ENCODE measurements at regions of chr6 and their contacts with region 1.

Region 1: DNA sequence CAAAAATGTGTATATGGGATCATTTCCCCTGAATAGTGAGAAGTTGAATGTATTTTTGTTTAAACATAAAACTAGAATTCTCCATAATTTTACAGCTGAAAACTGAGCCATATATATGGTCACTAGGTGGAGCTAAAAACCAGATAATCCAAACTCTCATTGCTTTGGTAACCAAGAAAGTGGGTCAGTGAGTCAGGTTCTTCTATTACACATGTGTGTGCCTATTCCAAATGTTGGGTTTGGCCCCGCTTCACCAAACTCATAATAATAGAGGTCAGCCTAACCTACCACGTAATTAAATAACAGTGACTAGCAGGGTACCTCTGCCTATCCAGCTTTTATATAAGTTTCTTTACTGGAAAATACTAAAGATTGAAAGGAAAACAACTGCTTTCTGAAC is 19.3 kb upstream of the RNGTT start:
- DNase-seq: peak; percentile 84
- H3K4me3 ChIP-seq: no peak overlapping the region
- H3K27ac ChIP-seq: peak overlapping the region in 1 of 4 donors; percentile 45
- H3K4me1 ChIP-seq: peaks cover 0 to 9% (median 7%) of the 10 kb centered on the region in 4 donors
- H3K27me3 ChIP-seq: no peaks in the 10 kb centered on the region
- CTCF ChIP-seq: peak; percentile 48 to 73 (median 66)
- EP300 ChIP-seq: no peak
- POLR2A ChIP-seq: no peak

Region 2: DNA sequence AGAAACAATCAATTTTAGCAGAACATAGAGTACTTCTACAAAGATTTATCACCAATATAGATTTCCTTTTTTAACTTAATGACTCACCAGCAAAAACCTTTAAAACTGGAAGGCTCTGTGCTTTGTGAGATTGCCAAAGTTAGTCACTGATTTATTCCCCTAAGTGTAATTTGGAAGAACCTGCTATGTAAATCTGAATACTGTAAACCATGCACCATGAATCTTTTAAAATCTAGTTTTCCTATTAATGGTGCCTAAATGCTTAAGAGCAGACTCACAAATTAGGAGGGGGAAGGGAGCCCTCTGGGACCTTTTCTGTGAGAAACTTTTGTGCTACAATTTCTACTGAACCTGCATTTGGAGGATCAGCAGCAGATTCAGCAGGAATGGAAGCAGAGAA is 40.1 kb after region 1 on chr6:
- intact Hi-C with region 1: loop called (anchors 5 kb)
- DNase-seq: no peak
- H3K4me3 ChIP-seq: no peak overlapping the region
- H3K27ac ChIP-seq: peak overlapping the region; percentile 78 to 89 (median 84)
- H3K4me1 ChIP-seq: peaks cover 0 to 43% (median 41%) of the 10 kb centered on the region in 4 donors
- H3K27me3 ChIP-seq: no peaks in the 10 kb centered on the region
- CTCF ChIP-seq: no peak
- EP300 ChIP-seq: peak; percentile 60 to 97 (median 95)
- POLR2A ChIP-seq: no peak

Region 3: GRCh38 chr6:89080542-89081422 is 98.1 kb after region 1 on chr6 and contains the start of gene PNRC1:
- intact Hi-C with region 1: loop called (anchors 2 kb)
- DNase-seq: peak; percentile 100
- H3K4me3 ChIP-seq: peak within 1 kb of the TSS; percentile 100
- H3K27ac ChIP-seq: peak within 1 kb of the TSS; percentile 100
- H3K4me1 ChIP-seq: peaks cover 0 to 37% (median 30%) of the 10 kb centered on the region in 4 donors
- H3K27me3 ChIP-seq: no peaks in the 10 kb centered on the region
- CTCF ChIP-seq: no peak
- EP300 ChIP-seq: peak in 1 of 4 donors; percentile 66
- POLR2A ChIP-seq: peak; percentile 99
- total RNA-seq, gene PNRC1: 211 to 349 (median 300) TPM

Region 4: GRCh38 chr6:89242574-89243330 is 260.0 kb after region 1 on chr6:
- intact Hi-C with region 1: loop called (anchors 1 kb)
- DNase-seq: no peak
- H3K4me3 ChIP-seq: no peak overlapping the region
- H3K27ac ChIP-seq: peak overlapping the region in 1 of 4 donors; percentile 6
- H3K4me1 ChIP-seq: peaks cover 0 to 8% (median 0%) of the 10 kb centered on the region in 4 donors
- H3K27me3 ChIP-seq: no peaks in the 10 kb centered on the region
- CTCF ChIP-seq: peak; percentile 35 to 70 (median 64)
- EP300 ChIP-seq: no peak
- POLR2A ChIP-seq: no peak

Region 5: DNA sequence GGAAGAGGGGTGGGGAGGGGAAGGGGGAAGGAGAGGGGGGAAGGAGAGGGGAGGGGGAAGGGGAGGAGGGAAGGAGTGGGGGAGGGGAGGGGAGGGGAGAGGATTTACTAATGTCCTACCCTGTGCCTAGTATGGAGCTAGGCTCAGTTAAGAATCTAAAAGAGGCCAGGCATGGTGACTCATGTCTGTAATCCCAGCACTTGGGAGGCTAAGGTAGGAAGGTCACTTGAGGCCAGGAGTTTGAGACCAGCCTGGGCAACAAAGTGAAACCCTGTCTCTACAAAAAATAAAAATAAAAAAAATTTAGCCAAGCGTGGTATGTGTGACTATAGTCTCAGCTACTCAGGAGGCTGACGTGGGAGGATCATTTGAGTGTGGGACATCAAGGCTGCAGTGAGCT is 356.8 kb after region 1 on chr6:
- intact Hi-C with region 1: no loop called
- DNase-seq: no peak
- H3K4me3 ChIP-seq: no peak overlapping the region
- H3K27ac ChIP-seq: no peak overlapping the region
- H3K4me1 ChIP-seq: peaks cover 0 to 8% (median 0%) of the 10 kb centered on the region in 4 donors
- H3K27me3 ChIP-seq: no peaks in the 10 kb centered on the region
- CTCF ChIP-seq: no peak
- EP300 ChIP-seq: no peak
- POLR2A ChIP-seq: no peak

Region 6: GRCh38 chr6:89371849-89372505 is 389.3 kb after region 1 on chr6:
- intact Hi-C with region 1: loop called (anchors 5 kb)
- DNase-seq: peak; percentile 77
- H3K4me3 ChIP-seq: no peak overlapping the region
- H3K27ac ChIP-seq: no peak overlapping the region
- H3K4me1 ChIP-seq: peaks cover 0 to 21% (median 11%) of the 10 kb centered on the region in 4 donors
- H3K27me3 ChIP-seq: no peaks in the 10 kb centered on the region
- CTCF ChIP-seq: peak; percentile 51 to 95 (median 72)
- EP300 ChIP-seq: no peak
- POLR2A ChIP-seq: no peak